Common myeloid progenitor, CD34-positive (primary cell): ENCODE measurements at regions of chr6 and their contacts with region 1.

Region 1: DNA sequence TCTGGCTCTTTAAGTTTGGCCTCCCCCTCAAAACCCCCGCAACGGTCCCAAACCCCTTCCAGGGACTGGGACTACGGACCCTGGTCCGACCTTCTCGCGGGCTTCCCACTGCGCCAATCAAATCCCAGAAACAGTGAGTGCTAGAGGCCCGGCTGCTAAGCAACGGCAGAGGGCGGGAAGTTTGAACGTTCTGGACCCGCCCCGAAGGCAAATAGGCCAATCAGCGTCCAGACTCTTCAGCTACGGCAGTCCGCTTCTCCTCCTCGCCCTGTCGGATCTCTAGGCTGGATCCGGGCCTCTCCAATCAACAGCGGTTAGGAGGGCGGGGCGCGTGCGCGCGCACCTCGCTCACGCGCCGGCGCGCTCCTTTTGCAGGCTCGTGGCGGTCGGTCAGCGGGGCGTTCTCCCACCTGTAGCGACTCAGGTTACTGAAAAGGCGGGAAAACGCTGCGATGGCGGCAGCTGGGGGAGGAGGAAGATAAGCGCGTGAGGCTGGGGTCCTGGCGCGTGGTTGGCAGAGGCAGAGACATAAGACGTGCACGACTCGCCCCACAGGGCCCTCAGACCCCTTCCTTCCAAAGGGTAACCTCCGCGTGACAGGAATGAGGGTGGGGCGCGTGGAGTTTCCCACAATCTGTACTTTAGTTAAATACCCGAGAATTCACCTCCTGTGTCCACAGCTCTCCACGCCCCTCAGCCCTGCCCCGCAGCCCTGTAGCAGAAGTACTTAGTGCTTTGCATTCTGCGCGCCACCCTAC is at the start of gene MSH5:
- DNase-seq: peak; percentile 96 to 98 (median 97)
- H3K4me3 ChIP-seq: peak within 1 kb of the TSS; percentile 71 to 100 (median 75)
- H3K27ac ChIP-seq: peak within 1 kb of the TSS; percentile 99
- H3K4me1 ChIP-seq: peaks cover 15 to 56% (median 44%) of the 10 kb centered on the region in 4 experiments
- H3K27me3 ChIP-seq: no peaks in the 10 kb centered on the region

Region 2: DNA sequence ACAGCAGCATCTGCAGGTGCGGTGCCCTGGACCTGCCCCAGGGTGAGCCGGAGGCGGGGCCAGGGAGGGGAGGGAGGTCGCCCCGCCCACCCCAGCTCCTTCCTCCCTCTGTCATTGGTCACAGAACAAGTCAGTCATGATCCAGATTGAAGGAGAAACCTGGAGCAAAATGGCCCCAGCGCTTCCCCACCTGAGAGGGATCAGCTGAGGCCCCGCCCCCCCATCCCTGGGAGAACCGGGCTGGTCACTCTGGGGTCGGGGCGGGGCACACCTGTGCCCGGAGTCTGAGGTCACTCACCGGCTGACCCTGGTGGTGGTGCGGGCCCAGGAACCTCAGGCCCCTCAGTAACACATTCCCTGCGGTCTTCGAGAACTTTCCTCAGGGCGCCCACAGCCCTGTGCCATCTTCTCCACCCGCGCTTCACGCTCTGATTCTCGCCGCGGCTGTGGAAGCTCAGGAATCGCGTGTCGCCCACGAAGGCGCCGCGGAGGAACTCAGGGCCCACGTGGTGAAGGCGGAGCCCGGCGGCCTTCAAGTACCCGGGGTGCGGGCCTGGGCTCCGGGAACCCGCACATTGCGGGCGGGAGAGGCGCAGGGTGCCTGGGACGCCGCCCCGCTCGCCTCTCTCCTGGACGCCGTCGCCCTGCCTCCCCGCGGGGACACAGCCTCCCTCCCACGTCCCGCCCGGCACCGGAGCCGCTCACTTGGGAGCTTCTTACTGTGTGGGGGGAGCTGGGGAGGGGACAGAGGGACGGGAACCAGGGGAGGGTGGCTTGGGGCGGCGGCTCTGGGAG is 431.6 kb before region 1 on chr6:
- CTCF ChIA-PET with region 1: no interaction called
- POLR2A ChIA-PET with region 1: no interaction called
- DNase-seq: peak; percentile 43 to 71 (median 60)
- H3K4me3 ChIP-seq: peak overlapping the region in 4 of 7 experiments; percentile 19 to 61 (median 42)
- H3K27ac ChIP-seq: no peak overlapping the region
- H3K4me1 ChIP-seq: peaks cover 0 to 7% (median 2%) of the 10 kb centered on the region in 4 experiments
- H3K27me3 ChIP-seq: peaks cover 11 to 35% (median 27%) of the 10 kb centered on the region in 5 experiments

Region 3: DNA sequence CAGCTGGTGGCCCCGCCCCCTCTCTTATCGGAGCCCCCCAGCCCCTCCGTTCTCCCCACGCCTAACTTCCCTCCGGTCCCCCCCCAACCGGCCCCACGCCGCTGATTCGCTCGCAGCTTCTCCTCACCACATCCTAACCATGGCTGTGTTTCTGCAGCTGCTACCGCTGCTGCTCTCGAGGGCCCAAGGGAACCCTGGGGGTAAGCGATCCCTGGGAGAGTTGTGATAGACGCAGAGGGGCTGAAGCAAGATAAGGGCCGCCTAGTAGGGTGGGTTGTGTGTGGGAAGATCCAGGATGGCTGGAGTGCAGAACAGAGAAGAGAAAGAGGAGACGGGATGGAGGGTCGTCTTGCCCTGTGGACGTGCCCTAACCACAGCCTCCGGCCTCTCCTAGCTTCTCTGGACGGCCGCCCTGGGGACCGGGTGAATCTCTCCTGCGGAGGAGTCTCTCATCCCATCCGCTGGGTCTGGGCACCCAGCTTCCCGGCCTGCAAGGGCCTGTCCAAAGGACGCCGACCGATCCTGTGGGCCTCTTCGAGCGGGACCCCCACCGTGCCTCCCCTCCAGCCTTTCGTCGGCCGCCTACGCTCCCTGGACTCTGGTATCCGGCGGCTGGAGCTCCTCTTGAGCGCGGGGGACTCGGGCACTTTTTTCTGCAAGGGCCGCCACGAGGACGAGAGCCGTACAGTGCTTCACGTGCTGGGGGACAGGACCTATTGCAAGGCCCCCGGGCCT is 16.4 kb before region 1 on chr6 and contains the start of gene MPIG6B:
- CTCF ChIA-PET with region 1: interaction called, 74 read pairs
- POLR2A ChIA-PET with region 1: interaction called, 21 read pairs
- DNase-seq: peak in 2 of 3 donors; percentile 73 to 80
- H3K4me3 ChIP-seq: peak within 1 kb of the TSS in 5 of 7 experiments; percentile 27 to 69 (median 56)
- H3K27ac ChIP-seq: peak within 1 kb of the TSS; percentile 33 to 65
- H3K4me1 ChIP-seq: peaks cover 11 to 58% (median 50%) of the 10 kb centered on the region in 4 experiments
- H3K27me3 ChIP-seq: no peaks in the 10 kb centered on the region

Region 4: DNA sequence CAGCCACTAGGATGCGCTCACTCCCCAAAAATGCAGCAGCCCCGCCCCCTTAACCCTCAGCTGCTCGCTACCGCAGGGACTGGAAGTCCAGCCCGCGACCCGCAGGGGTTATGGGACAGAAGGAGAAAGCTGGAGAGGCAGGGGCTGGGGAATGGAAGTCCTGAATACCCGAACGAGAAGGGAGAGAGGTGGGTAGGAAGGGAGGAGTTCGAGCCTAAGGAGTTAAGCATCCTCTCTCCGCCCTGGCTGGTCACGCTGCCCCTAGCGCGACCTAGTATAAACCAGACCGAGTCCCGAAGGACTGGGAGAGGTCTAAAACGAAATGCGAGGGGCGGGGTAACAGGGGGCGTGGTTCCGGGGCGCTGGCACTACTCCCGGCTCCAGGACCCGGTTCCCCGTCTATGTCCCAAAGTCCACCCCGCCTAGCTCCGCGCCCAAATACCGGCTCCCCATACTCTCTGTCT is 10.3 kb before region 1 on chr6:
- CTCF ChIA-PET with region 1: interaction called, 74 read pairs
- POLR2A ChIA-PET with region 1: interaction called, 53 read pairs
- DNase-seq: peak; percentile 88 to 91 (median 91)
- H3K4me3 ChIP-seq: peak overlapping the region; percentile 81 to 100 (median 95)
- H3K27ac ChIP-seq: peak overlapping the region; percentile 62 to 88
- H3K4me1 ChIP-seq: peaks cover 20 to 78% (median 67%) of the 10 kb centered on the region in 4 experiments
- H3K27me3 ChIP-seq: no peaks in the 10 kb centered on the region

Region 5: GRCh38 chr6:31752739-31753319 is 13.0 kb after region 1 on chr6:
- CTCF ChIA-PET with region 1: interaction called, 13 read pairs
- POLR2A ChIA-PET with region 1: no interaction called
- DNase-seq: no peak
- H3K4me3 ChIP-seq: no peak overlapping the region
- H3K27ac ChIP-seq: no peak overlapping the region
- H3K4me1 ChIP-seq: no peaks in the 10 kb centered on the region
- H3K27me3 ChIP-seq: no peaks in the 10 kb centered on the region

Region 6: GRCh38 chr6:32195652-32195901 is 455.8 kb after region 1 on chr6:
- CTCF ChIA-PET with region 1: no interaction called
- POLR2A ChIA-PET with region 1: no interaction called
- DNase-seq: peak; percentile 100
- H3K4me3 ChIP-seq: peak overlapping the region in 6 of 7 experiments; percentile 84 to 98 (median 96)
- H3K27ac ChIP-seq: peak overlapping the region; percentile 98 to 99
- H3K4me1 ChIP-seq: peaks cover 16 to 64% (median 61%) of the 10 kb centered on the region in 4 experiments
- H3K27me3 ChIP-seq: no peaks in the 10 kb centered on the region